Left cardiac atrium (tissue), 4 donors: ENCODE measurements at regions of chr6 and their contacts with region 1.

Region 1: GRCh38 chr6:3990692-3991501 is 88.0 kb downstream of the FAM217A start:
- DNase-seq: peak; percentile 93
- ATAC-seq: peak; percentile 96

Region 2: GRCh38 chr6:3281631-3282475 is 709.0 kb before region 1 on chr6:
- intact Hi-C with region 1: loop called in 1 of 2 experiments (anchors 10 kb)
- DNase-seq: no peak
- ATAC-seq: peak; percentile 32 to 81

Region 3: DNA sequence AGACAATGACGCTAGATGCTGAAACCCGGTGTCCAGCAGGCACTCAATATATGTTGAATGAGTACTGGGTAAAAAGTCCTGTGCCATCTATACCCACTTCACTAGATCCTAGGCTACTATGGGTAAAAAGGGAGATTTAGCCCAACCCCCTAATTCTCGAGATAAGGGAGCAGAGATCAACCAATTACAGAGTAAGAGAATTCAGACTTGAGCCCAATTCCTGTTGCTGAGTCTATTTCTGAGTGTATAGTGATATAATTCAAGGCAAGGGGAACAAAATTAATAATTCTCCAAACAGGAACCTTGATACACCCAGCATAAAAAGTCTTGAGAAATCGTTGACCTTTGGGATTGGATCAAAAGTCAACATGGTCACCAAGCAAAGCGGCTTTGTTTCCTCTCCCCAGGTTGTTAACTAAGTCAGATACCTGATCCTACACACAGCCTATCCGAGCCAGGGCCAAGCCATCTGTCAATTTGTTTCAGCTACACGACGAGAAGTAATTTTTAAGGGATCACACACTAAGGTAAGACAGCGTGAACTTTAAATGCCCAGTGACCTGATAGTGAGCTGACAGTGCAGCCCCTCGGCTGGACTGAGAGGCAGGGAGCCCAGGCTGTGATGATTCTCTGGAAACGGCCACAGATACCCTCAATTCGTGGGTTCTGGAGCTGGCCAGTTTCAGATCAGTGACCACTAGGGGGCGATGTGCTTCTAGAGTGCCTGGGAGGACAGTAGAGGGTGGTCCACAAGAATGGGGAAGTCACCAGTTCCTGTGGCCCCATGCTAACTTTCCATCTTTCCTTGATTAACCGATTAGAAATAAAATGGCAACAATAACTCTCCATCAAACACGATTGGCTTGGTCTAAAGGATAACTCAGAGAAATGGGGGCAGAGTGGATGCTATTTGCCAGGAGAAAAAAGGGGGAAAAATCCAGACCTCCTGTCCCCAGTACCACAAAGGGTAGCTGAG is 580.2 kb before region 1 on chr6:
- intact Hi-C with region 1: loop called in 1 of 2 experiments (anchors 10 kb)
- DNase-seq: peak; percentile 60
- ATAC-seq: peak in 1 of 2 donors; percentile 55

Region 4: DNA sequence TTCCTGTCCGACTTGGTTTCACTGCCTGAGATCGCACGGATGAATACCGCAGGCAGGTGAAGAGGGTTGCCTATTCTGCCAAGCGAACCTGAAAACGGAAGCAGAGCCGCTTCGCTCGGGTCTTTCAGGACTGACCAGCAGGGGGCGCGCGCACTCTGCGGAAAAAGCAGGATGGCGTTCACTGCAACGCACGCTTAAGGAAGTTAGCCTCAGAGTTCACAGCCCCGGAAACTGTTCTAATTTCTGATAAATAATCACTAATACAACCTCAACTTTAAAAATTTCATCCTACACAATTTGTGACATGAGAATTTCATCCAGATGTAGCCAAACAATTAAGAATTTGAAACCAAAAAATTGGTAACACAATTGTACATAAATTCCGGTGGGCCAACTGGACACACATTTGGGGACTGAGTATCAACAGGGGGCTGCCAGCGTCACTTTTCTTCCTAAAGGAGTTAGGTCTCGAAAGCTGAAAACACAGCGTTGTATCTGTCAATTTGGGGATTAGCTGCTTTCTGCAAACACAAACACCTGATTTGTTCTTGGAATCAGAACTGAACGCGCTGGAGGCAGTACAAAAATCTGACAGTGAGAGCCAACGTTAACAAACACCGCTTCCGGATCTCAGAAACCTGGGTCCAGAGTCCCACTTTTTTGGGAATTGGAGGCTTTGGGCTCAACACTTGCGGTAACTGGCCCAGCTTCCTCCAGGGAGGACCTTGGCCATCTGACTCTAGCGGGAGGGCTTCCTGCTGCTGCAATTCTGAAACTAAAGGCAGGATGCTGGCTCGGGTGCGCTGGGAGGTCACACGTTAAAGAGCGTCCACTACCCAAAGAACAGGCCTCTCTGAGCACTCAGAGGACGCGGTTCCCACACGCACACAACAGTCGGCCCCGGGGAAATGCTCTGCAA is 248.2 kb before region 1 on chr6:
- intact Hi-C with region 1: loop called (anchors 5 kb)
- DNase-seq: peak; percentile 84
- ATAC-seq: peak; percentile 78 to 85

Region 5: DNA sequence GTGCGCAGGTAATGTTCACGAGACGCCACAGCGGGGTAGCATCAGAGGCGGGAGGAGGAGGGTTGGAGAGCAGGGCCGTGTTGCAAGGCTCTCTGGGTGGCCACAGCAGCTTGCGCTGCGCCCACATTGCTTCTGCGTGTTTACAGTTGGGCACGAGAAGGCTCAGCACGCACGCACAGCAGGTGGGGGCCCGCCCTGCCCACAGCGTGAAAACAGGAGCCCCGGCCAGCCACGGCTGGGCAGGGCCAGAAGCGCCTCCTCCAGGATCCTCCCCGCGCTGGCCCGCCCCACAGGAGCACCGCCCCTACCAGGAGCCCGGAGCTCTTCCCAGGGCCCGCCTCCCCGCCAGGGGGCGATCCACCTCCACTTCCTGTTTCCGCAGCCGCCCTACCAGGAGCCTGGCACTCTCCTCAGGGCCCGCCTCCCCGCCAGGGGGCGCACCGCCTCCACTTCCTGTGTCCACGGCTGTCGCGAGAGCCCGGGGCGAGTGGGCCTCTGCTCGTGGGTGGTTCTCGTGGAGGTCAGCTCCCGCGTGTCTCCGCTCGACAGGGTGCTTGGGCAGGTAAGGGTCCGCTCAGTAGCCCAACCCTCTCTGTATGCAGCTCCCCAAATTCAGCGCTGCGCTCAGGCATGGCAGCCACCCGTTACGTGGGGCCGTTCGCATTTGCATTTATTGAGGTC is 141.8 kb before region 1 on chr6 and contains the start of gene FAM50B:
- intact Hi-C with region 1: loop called in 1 of 2 experiments (anchors 5 kb)
- DNase-seq: peak; percentile 92
- ATAC-seq: peak; percentile 95 to 98
- total RNA-seq, gene FAM50B: 13.4 to 18.8 TPM

Region 6: DNA sequence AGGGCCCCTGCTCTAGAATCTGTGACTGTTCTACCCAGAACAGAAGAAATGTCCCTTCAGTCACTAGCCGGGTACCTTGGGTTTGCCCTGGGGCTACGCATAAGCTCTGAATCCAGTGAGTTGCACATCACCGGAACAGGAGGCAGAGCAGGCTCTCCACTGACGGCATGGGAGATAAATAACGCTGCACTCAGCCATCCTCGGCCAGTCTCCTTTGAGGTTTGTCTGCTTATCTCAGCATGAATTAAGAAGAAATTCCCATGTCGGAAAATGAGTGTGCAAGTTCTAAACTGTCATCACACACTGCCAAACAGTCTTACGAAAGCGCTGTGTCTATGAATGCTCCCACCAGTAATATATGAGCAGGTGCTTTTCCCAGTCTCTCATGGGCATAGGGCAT is 50.9 kb before region 1 on chr6:
- intact Hi-C with region 1: loop called in 1 of 2 experiments (anchors 10 kb)
- DNase-seq: no peak
- ATAC-seq: peak; percentile 63 to 87